Panc1 (cell line): ENCODE measurements at regions of chr11 and their contacts with region 1.

Region 1: GRCh38 chr11:7062534-7062933 is 26.3 kb upstream of the RBMXL2 start:
- DNase-seq: no peak
- ATAC-seq: no peak
- H3K4me3 ChIP-seq: no peak overlapping the region
- H3K27ac ChIP-seq: no peak overlapping the region
- H3K4me1 ChIP-seq: no peaks in the 10 kb centered on the region
- H3K27me3 ChIP-seq: peaks cover 3% of the 10 kb centered on the region; the same call in 1 of the 2 replicates
- CTCF ChIP-seq: no peak

Region 2: DNA sequence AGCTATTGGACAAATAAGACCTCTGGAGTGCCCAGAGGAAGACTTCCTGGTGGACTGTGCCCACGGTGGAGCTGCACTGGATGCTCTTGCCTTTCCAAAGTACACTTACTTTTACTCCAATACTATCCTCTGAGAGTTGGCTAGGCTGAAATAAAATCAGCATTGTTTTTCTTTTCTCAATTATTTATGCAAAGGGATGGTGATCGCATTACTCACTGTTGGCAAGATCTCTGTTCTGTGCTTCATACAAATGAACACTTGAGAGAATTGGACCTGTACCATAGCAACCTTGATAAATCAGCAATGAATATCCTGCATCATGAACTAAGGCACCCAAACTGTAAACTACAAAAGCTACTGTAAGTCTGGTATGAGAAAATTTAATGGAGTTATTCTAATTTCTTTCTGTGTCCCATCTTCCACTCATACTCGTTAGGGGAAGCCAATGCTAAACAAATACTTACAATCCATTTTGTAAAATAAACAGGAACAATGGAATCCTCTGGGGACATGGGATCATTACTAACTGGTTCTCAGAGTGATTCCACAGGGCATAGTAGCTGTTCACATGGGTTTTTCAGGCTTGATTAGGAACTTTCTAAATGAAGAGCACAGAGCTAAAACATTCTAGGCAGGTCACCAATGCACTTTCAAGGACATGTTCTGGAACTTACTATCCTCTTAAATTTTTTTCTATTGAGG is 15.9 kb before region 1 on chr11:
- CTCF ChIA-PET with region 1: no interaction called
- POLR2A ChIA-PET with region 1: no interaction called
- in situ Hi-C with region 1: no loop called
- intact Hi-C with region 1: no loop called
- DNase-seq: no peak
- ATAC-seq: no peak
- H3K4me3 ChIP-seq: no peak overlapping the region
- H3K27ac ChIP-seq: no peak overlapping the region
- H3K4me1 ChIP-seq: no peaks in the 10 kb centered on the region
- H3K27me3 ChIP-seq: peaks cover 4% of the 10 kb centered on the region; the same call in 1 of the 2 replicates
- CTCF ChIP-seq: no peak

Region 3: DNA sequence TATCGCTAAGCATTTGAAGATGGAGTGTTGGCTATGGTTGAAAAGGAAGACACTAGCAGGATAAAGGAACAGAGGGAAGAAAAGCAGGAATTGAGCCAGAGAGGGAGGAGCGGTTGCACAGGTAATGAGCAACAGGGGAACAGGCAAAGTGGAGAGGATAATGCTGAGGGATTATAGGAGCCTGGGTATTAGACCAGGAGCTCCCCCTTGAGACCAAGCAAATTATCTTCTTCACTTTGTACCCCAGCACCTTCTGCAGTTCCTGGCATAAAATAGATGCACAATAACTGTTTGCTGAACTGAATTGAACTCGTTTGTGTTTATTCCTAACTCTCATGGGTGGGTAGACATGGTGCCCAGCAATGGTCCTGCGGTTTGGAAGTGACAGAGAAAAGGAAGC is 788.9 kb after region 1 on chr11:
- CTCF ChIA-PET with region 1: interaction called, 15 read pairs
- POLR2A ChIA-PET with region 1: no interaction called
- in situ Hi-C with region 1: no loop called
- intact Hi-C with region 1: no loop called
- DNase-seq: no peak
- ATAC-seq: peak; percentile 83
- H3K4me3 ChIP-seq: no peak overlapping the region
- H3K27ac ChIP-seq: no peak overlapping the region
- H3K4me1 ChIP-seq: no peaks in the 10 kb centered on the region
- H3K27me3 ChIP-seq: no peaks in the 10 kb centered on the region
- CTCF ChIP-seq: peak; percentile 62